Sciatic nerve (tissue), 2 donors: ENCODE measurements at regions of chr1 and their contacts with region 1.

Region 1: DNA sequence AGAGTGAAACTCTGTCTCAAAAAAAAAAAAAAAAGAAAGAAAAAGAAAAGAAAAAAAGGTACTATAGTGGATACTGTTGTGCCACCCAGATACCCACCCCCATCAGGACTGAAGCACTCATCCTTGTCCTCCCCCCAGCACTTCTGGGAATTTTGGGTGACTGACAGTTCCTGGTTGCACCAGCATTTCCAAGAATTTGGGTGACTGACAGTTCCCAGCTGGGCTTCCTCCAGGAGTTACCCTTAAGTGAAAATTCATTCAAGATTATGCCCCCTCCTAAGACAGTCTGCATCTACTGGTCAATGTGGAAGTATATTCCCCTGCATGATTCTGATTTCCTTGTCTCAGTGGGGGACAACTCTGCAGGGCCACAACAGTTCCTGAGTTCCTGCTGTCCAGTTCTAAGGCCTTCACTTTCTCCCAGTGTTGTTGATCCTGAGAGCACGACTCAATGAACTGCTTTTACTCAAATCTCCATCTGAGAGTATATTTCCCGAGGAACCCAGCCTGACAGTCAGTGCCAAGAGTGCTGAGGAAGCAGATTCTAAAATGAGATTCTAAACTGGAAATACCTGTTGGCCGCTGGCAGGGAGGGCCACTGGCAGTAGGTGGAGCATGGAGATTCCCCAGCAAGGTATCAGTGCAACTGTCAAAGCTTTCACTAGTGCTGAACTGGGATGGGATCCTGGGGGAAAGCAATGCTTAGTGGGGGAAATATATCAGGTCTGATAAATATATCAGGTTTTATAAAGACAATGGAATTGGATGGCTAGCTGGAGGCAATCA is 18.5 kb downstream of the RIIAD1 start:
- DNase-seq: no peak
- ATAC-seq: no peak

Region 2: DNA sequence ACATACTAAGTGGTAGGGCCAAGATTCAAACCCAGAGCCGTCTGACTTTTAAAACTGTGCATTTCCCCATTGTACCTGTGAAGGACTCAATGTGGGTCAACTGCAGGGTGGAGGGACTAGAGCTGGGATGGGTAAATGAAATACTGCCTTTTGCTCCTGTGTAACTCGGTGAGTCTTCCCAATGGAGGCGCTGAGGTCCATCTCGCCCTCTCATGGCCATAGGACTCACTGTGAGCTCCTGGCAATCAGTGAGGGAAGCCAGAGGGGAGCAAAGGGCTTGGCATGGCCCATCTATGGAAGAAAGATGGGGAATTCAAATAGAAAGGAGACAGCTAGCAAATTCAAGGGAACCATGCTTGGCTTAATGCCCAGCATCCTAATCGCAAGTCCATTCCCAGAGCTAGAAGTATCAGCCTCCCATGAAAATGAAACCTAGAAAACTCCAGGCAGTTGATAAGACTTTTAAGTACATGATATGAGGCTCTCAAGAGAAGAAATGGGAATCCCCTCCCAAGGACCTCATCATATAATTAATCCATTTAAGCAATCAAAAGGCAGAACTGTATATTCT is 254.0 kb before region 1 on chr1:
- intact Hi-C with region 1: no loop called
- DNase-seq: no peak
- ATAC-seq: no peak

Region 3: GRCh38 chr1:151520359-151520758 is 219.4 kb before region 1 on chr1:
- intact Hi-C with region 1: loop called (anchors 10 kb)
- DNase-seq: no peak
- ATAC-seq: peak; percentile 71

Region 4: GRCh38 chr1:151594143-151594625 is 145.6 kb before region 1 on chr1:
- intact Hi-C with region 1: loop called (anchors 10 kb)
- DNase-seq: peak; percentile 86
- ATAC-seq: peak; percentile 76

Region 5: DNA sequence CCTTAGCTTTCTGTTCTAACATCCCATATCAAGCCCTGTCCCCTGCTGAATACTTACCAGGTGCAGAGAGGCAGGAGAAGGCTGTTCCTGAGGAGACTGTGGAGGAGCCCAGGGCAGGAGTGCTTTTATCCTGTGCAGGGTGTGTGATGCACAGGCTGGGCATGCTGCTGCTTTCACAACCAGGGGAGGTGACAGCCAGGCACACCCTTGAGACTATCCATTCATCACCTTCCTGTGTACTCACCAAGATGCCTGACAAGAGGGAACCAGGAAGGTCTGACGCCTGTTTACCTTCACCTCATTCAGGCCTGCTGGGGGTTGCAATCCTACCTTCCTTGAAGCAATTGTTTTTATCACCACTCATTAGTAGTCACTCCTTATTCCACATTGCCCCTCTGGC is 826.9 kb after region 1 on chr1 and contains the start of gene LCE3E:
- intact Hi-C with region 1: no loop called
- DNase-seq: no peak
- ATAC-seq: no peak
- total RNA-seq, gene LCE3E: not detected